Endothelial cell of umbilical vein (primary cell): ENCODE measurements at regions of chr6 and their contacts with region 1.

Region 1: GRCh38 chr6:157535339-157536222 is 154.6 kb downstream of the ZDHHC14 start:
- DNase-seq: peak; percentile 96
- H3K4me3 ChIP-seq: peak overlapping the region in 1 of 3 experiments; percentile 34
- H3K27ac ChIP-seq: peak overlapping the region; percentile 94
- H3K4me1 ChIP-seq: peaks cover 42% of the 10 kb centered on the region
- H3K27me3 ChIP-seq: no peaks in the 10 kb centered on the region
- CTCF ChIP-seq: no peak
- POLR2A ChIP-seq: no peak

Region 2: GRCh38 chr6:157461000-157461915 is 74.3 kb before region 1 on chr6:
- CTCF ChIA-PET with region 1: interaction called, 3 read pairs
- POLR2A ChIA-PET with region 1: no interaction called
- dilution Hi-C with region 1: no loop called
- intact Hi-C with region 1: loop called (anchors 1 kb)
- DNase-seq: peak; percentile 84
- H3K4me3 ChIP-seq: no peak overlapping the region
- H3K27ac ChIP-seq: peak overlapping the region; percentile 72
- H3K4me1 ChIP-seq: peaks cover 24% of the 10 kb centered on the region
- H3K27me3 ChIP-seq: no peaks in the 10 kb centered on the region
- CTCF ChIP-seq: peak; percentile 31 to 52
- POLR2A ChIP-seq: no peak

Region 3: DNA sequence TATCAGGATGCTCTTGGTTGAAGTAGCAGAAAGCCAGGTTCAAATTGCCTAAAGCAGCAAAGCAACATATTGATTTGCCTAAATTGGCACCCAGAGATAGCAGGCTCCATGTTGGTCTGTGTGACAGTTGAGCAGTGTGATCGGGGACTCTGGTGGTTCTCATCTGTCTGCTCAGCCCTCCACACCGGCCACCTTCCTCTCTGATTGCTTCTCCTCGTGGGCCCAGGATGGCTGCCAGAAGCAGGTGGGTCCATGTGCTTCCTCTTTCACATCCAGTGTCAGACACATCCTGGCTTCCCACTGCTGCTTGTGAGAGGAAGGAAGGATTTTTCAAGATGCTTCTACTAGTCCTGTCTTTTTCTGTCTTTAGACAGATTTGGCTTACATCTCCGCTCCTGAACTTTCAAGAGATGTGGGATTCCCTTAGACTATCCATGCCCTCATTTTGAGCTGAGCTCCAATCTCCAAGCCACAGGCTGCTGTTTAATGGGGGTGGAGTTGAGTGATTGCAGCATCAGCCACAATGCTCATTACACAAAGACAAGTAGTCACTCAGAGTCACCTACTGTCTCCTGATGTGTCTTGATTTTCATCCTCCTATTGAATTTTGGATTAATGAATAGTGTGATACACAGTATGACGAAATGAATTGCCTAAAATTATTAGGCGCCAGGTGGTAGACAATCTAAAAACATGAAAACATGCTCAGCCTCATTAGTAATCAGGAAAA is 32.4 kb before region 1 on chr6:
- CTCF ChIA-PET with region 1: no interaction called
- POLR2A ChIA-PET with region 1: no interaction called
- dilution Hi-C with region 1: no loop called
- intact Hi-C with region 1: loop called (anchors 1 kb)
- DNase-seq: no peak
- H3K4me3 ChIP-seq: no peak overlapping the region
- H3K27ac ChIP-seq: no peak overlapping the region
- H3K4me1 ChIP-seq: peaks cover 23% of the 10 kb centered on the region
- H3K27me3 ChIP-seq: no peaks in the 10 kb centered on the region
- CTCF ChIP-seq: no peak
- POLR2A ChIP-seq: no peak

Region 4: DNA sequence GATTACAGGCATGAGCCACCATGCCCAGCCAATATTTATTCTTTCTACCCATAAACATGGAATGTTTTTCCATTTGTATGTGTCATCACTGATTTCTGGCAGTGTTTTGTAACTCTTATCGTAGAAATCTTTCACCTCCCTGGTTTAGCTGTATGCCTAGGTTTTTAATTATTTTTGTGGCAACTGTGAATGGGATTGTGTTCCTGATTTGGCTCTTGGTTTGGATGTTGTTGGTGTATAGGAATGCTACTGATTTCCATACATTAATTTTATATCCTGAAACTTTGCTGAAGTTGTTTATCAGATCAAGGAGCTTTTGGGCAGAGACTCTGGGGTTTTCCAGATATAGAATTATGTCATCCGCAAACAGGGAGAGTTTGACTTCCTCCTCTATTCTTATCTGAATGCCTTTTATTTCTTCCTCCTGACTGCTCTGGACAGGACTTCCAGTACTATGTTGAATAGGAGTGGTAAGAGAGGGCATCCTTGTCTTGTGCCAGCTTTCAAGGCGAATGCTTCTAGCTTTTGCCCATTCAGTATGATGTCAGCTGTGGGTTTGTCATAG is 44.0 kb after region 1 on chr6:
- CTCF ChIA-PET with region 1: interaction called, 3 read pairs
- POLR2A ChIA-PET with region 1: no interaction called
- dilution Hi-C with region 1: no loop called
- intact Hi-C with region 1: loop called (anchors 1 kb)
- DNase-seq: peak; percentile 90
- H3K4me3 ChIP-seq: no peak overlapping the region
- H3K27ac ChIP-seq: peak overlapping the region; percentile 74
- H3K4me1 ChIP-seq: peaks cover 21% of the 10 kb centered on the region
- H3K27me3 ChIP-seq: no peaks in the 10 kb centered on the region
- CTCF ChIP-seq: no peak
- POLR2A ChIP-seq: no peak

Region 5: GRCh38 chr6:157614026-157614568 is 78.5 kb after region 1 on chr6:
- CTCF ChIA-PET with region 1: no interaction called
- POLR2A ChIA-PET with region 1: no interaction called
- dilution Hi-C with region 1: no loop called
- intact Hi-C with region 1: loop called (anchors 2 kb)
- DNase-seq: no peak
- H3K4me3 ChIP-seq: no peak overlapping the region
- H3K27ac ChIP-seq: no peak overlapping the region
- H3K4me1 ChIP-seq: peaks cover 13% of the 10 kb centered on the region
- H3K27me3 ChIP-seq: no peaks in the 10 kb centered on the region
- CTCF ChIP-seq: no peak
- POLR2A ChIP-seq: no peak

Region 6: DNA sequence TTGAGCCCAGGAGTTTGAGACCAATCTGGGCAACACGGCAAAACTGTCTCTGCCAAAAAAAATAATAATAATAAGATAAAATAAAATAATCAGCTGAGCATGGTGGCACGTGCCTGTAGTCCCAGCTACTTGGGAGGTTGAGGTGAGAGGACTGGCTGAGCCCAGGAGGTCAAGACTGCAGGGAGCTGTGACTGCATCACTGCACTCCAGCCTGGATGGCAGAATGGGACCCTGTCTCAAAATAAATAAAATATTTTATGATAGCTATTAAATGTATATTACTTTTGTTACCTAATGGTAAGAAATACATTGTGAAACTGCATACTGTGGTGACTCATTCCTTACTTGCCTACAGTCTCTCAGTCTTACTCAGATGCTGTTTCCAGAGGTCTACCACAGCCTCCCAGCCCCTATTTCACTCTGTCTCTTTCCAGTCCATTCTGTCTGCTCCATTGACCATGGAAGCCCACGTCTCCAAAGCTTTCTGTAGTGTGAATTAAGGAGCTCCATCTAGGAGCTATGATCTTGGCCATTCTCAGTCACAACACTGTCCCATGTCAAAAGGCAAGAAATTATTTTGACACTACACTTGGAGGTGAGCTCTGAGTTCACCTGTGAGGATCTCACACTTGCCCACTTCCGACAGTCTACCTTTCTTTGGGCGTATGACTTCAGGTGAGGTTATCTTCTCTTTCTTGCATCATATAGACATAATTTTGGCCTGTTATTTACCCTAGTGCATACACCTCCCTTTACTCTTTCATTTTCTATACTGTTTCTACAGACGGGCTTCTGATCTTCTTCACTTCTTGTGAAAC is 265.0 kb after region 1 on chr6:
- CTCF ChIA-PET with region 1: no interaction called
- POLR2A ChIA-PET with region 1: no interaction called
- dilution Hi-C with region 1: no loop called
- intact Hi-C with region 1: no loop called
- DNase-seq: no peak
- H3K4me3 ChIP-seq: no peak overlapping the region
- H3K27ac ChIP-seq: no peak overlapping the region
- H3K4me1 ChIP-seq: peaks cover 3% of the 10 kb centered on the region
- H3K27me3 ChIP-seq: no peaks in the 10 kb centered on the region
- CTCF ChIP-seq: no peak
- POLR2A ChIP-seq: no peak